ENCODE measurements at regions of chr10 and their contacts with region 1.

Region 1: DNA sequence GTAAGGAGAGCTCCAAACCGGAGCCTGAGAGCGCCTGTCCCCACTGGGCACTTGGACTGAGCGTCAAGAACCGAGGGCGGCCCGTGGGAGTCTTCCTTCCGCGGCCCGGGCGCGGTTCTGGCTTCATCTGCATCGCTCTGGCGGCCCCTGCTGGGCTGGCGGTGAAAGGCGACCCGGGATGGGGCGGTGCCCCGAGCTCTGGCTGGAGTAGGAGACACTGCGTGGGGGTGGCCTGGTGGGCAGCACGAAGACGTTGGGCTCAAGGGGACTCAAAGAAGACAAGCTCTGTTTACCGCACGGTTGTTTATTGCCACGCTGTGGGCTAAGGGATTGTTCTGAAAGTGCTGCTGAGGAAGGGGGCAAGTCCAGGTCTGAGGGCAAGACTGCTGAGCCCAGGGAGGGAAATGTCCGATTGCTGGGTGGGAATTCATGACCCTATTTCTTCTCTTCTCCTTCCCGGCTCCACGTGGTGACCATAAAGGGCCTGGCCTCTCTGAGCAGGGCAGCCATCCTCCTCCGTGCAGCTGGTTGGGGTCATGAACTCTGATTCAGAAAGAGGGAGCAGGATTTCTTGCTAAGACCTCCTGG is 29.8 kb downstream of the PLAU start:
- H3K4me3 ChIP-seq: no peak overlapping the region
- H3K27ac ChIP-seq: no peak overlapping the region
- H3K4me1 ChIP-seq: no peaks in the 10 kb centered on the region
- CTCF ChIP-seq: 0 out of 2 replicates have a peak, but pooled peaks have one; percentile 20

Region 2: GRCh38 chr10:73857446-73857845 is 83.3 kb before region 1 on chr10:
- CTCF ChIA-PET with region 1: interaction called, 10 read pairs
- POLR2A ChIA-PET with region 1: no interaction called
- H3K4me3 ChIP-seq: no peak overlapping the region
- H3K27ac ChIP-seq: no peak overlapping the region
- H3K4me1 ChIP-seq: peaks cover 6% of the 10 kb centered on the region; the same call in 1 of the 2 replicates
- CTCF ChIP-seq: no peak

Region 3: DNA sequence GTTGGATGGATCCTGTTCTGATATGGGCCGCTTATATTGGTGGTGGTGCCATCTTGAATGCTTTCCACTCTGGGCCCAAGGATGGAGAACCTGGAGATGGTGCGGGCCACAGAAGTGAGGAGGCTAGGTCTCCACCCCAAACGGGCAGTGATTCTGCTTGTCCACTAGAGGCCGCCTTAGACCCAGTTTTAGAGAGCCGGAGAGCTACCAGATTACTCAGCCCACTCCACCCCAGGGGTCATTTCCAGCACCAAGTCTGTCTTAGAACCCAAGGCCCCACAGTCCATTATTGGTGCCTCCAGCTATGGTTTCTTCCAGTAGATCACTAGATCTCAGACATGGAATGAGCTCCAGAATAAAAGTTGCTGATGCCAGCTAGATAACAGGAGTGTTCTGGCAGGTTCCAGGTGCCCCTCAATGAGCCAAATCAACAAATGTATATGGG is 54.6 kb before region 1 on chr10:
- CTCF ChIA-PET with region 1: interaction called, 182 read pairs
- POLR2A ChIA-PET with region 1: interaction called, 3 read pairs
- H3K4me3 ChIP-seq: no peak overlapping the region
- H3K27ac ChIP-seq: no peak overlapping the region
- H3K4me1 ChIP-seq: peaks cover 11% of the 10 kb centered on the region
- CTCF ChIP-seq: peak; percentile 92

Region 4: GRCh38 chr10:73915206-73915851 is 25.4 kb before region 1 on chr10:
- CTCF ChIA-PET with region 1: interaction called, 12 read pairs
- POLR2A ChIA-PET with region 1: no interaction called
- H3K4me3 ChIP-seq: no peak overlapping the region
- H3K27ac ChIP-seq: no peak overlapping the region
- H3K4me1 ChIP-seq: no peaks in the 10 kb centered on the region
- CTCF ChIP-seq: no peak

Region 5: DNA sequence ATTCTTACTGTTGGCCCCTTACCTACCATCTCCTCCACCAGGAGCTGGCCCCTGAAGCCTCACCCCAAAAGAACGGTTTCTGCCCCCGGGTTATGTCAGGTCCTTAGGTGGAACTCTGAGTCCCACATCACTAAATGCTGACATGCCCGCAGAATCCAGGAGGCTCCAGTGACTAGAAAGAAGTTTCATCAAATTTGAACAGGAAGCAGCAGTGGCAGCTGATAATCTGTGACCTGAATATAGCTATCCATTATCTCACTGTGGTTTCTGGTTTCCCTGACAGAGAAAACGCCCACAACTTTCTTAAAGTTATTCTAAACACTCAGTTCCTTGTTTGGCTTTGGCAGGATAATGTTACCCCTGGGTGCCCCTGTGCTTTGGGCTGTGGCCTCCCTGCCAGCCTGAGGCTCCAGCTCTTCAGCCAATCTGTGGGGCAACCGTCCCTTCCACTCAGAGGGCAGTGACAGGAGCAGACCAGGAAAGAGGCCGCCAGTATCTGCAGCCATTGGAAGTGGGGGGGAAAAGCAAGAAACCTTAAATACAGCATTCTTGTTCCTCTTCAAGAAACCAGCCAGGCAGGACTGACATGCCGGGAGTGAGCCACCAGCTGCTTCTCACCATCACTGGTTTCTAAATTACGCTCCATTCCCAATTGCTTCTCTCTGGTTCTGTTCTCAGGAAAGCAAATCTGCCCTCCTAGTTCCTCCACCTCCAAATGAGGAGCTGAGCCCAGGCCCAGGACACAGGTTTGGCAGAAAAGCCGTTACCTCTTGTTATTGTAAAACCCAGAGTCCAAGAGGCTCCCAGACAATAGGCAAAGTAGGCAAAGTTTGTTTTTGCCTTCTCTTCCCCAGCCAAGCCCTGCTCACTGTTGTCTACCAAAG is 16.0 kb after region 1 on chr10:
- CTCF ChIA-PET with region 1: interaction called, 21 read pairs
- POLR2A ChIA-PET with region 1: no interaction called
- H3K4me3 ChIP-seq: no peak overlapping the region
- H3K27ac ChIP-seq: peak overlapping the region; percentile 56
- H3K4me1 ChIP-seq: peaks cover 10% of the 10 kb centered on the region; the same call in 1 of the 2 replicates
- CTCF ChIP-seq: no peak

Region 6: DNA sequence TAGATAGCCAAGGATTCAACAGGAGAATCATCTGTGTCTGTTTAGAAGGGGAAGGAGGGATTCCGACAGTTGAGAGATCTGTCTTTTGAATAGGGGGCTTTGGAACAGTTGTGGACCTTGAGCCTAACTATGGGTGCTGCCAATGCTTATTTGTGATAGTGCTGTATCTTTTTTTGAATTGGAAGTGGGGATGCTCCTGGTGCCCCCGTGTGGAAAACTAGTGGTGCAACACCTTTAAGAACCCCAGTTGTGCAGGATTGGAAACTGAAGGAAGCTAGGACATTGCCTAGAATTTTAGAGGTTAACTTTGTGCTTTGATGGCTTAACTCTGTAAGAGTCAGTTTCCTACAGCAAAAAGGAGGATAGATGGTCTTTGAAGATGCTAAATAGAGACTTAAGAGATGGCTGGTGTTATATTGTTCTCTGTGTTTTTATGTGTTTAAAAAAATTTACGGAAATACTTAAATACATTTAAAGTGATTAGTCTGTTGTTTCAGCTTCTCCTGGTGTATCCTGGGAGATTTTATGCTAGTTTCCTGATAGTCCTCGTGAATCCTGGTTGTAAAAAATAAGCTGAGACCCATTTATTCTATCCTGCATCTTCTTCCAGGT is 140.6 kb after region 1 on chr10:
- CTCF ChIA-PET with region 1: interaction called, 16 read pairs
- POLR2A ChIA-PET with region 1: no interaction called
- H3K4me3 ChIP-seq: no peak overlapping the region
- H3K27ac ChIP-seq: no peak overlapping the region
- H3K4me1 ChIP-seq: peaks cover 10% of the 10 kb centered on the region
- CTCF ChIP-seq: peak; percentile 62; the same call in 1 of the 2 replicates

Measured in HEK293 (cell line).